ENCODE measurements at regions of chr22 and their contacts with region 1.

Region 1: DNA sequence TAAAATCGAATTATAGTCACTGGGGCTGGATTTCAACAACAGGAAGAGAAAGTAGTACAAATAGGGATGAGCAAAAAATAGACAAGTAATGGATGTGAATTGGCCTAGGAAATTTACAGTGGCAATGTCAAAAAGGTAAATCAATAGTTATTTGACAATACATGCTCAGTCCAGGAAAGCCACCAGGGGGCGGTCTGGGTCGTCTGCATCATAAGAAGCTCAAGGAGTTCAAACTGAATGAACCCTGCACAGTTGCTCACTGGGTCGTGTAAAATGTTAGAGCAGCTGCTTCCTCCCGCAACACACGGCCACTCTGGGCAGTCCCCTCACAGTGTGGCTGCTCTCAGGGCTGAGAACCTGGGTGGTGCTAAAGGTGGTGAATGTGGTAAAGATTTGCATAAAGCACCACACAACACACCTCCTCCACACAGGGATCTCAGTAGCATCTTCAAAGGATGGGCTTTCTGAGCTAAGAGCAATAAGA is 85.9 kb downstream of the ZNF280B start:
- DNase-seq: peak; percentile 96
- ATAC-seq: peak; percentile 99
- H3K4me3 ChIP-seq: no peak overlapping the region
- H3K4me3 Mint-ChIP-seq: peak overlapping the region; percentile 33
- H3K27ac ChIP-seq: peak overlapping the region in 1 of 2 donors; percentile 42
- H3K27ac Mint-ChIP-seq: peak overlapping the region; percentile 72
- H3K4me1 ChIP-seq: peaks cover 61 to 63% of the 10 kb centered on the region in 2 donors
- H3K4me1 Mint-ChIP-seq: peaks cover 65% of the 10 kb centered on the region
- H3K27me3 ChIP-seq: no peaks in the 10 kb centered on the region
- H3K27me3 Mint-ChIP-seq: no peaks in the 10 kb centered on the region
- CTCF ChIP-seq: peak; percentile 92

Region 2: GRCh38 chr22:22176929-22177616 is 245.6 kb before region 1 on chr22:
- CTCF ChIA-PET with region 1: no interaction called
- POLR2A ChIA-PET with region 1: no interaction called
- intact Hi-C with region 1: no loop called
- DNase-seq: no peak
- ATAC-seq: no peak
- H3K4me3 ChIP-seq: no peak overlapping the region
- H3K4me3 Mint-ChIP-seq: no peak overlapping the region
- H3K27ac ChIP-seq: no peak overlapping the region
- H3K27ac Mint-ChIP-seq: no peak overlapping the region
- H3K4me1 ChIP-seq: peaks cover 9 to 19% of the 10 kb centered on the region in 2 donors
- H3K4me1 Mint-ChIP-seq: peaks cover 47% of the 10 kb centered on the region
- H3K27me3 ChIP-seq: no peaks in the 10 kb centered on the region
- H3K27me3 Mint-ChIP-seq: no peaks in the 10 kb centered on the region
- CTCF ChIP-seq: no peak

Region 3: GRCh38 chr22:22248878-22249277 is 173.8 kb before region 1 on chr22:
- CTCF ChIA-PET with region 1: no interaction called
- POLR2A ChIA-PET with region 1: no interaction called
- intact Hi-C with region 1: no loop called
- DNase-seq: no peak
- ATAC-seq: peak; percentile 28
- H3K4me3 ChIP-seq: no peak overlapping the region
- H3K4me3 Mint-ChIP-seq: peak overlapping the region; percentile 27
- H3K27ac ChIP-seq: peak overlapping the region in 1 of 2 donors; percentile 31
- H3K27ac Mint-ChIP-seq: peak overlapping the region; percentile 57
- H3K4me1 ChIP-seq: peaks cover 43 to 45% of the 10 kb centered on the region in 2 donors
- H3K4me1 Mint-ChIP-seq: peaks cover 47% of the 10 kb centered on the region
- H3K27me3 ChIP-seq: no peaks in the 10 kb centered on the region
- H3K27me3 Mint-ChIP-seq: no peaks in the 10 kb centered on the region
- CTCF ChIP-seq: no peak

Region 4: GRCh38 chr22:22357024-22357883 is 65.4 kb before region 1 on chr22:
- CTCF ChIA-PET with region 1: interaction called, 10 read pairs
- POLR2A ChIA-PET with region 1: no interaction called
- intact Hi-C with region 1: loop called (anchors 5 kb)
- DNase-seq: peak; percentile 93
- ATAC-seq: peak; percentile 90
- H3K4me3 ChIP-seq: peak overlapping the region in 3 of 5 experiments; percentile 18 to 27 (median 26)
- H3K4me3 Mint-ChIP-seq: peak overlapping the region; percentile 65
- H3K27ac ChIP-seq: peak overlapping the region; percentile 61 to 71
- H3K27ac Mint-ChIP-seq: peak overlapping the region; percentile 90
- H3K4me1 ChIP-seq: peaks cover 29 to 49% of the 10 kb centered on the region in 2 donors
- H3K4me1 Mint-ChIP-seq: peaks cover 59% of the 10 kb centered on the region
- H3K27me3 ChIP-seq: no peaks in the 10 kb centered on the region
- H3K27me3 Mint-ChIP-seq: no peaks in the 10 kb centered on the region
- CTCF ChIP-seq: peak; percentile 72

Region 5: DNA sequence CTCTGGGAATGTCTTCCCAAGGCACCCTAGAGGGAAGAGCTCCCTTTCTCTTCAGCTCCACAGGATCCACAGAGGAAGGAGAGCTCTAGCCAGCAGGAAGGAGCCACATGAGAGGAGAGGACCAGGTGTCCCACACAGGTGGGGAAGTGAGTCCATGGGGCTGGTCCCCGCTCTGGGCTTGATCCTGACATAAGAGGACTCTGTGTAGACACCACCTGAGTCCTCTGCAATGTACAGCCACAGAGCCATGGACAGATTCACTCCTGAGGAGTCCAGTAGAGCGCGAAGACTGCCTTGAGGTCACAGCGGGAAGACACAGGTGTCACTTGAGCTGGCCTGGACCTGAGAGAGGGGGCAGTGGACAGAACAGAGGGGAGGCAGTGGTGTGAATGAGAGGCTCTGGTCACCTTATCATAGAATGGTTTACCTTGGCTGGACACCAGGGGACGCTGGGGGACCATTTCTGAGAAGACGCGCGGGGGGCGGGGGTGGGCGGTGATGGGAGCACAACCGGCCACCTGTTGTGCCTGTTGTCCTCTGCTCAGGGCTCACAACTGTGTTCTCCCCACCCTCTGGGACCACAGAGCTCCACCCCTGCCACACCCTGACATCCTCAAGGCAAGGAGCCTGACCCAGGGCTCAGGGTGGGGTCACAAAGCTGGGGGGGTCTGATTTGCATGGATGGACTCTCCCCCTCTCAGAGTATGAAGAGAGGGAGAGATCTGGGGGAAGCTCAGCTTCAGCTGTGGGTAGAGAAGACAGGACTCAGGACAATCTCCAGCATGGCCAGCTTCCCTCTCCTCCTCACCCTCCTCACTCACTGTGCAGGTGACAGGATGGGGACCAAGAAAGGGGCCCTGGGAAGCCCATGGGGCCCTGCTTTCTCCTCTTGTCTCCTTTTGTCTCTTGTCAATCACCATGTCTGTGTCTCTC is 42.3 kb before region 1 on chr22:
- CTCF ChIA-PET with region 1: interaction called, 23 read pairs
- POLR2A ChIA-PET with region 1: no interaction called
- intact Hi-C with region 1: no loop called
- DNase-seq: peak; percentile 87
- ATAC-seq: peak; percentile 88
- H3K4me3 ChIP-seq: peak overlapping the region in 1 of 5 experiments; percentile 15
- H3K4me3 Mint-ChIP-seq: peak overlapping the region; percentile 77
- H3K27ac ChIP-seq: peak overlapping the region; percentile 60 to 72
- H3K27ac Mint-ChIP-seq: peak overlapping the region; percentile 94
- H3K4me1 ChIP-seq: peaks cover 59 to 69% of the 10 kb centered on the region in 2 donors
- H3K4me1 Mint-ChIP-seq: peaks cover 79% of the 10 kb centered on the region
- H3K27me3 ChIP-seq: no peaks in the 10 kb centered on the region
- H3K27me3 Mint-ChIP-seq: no peaks in the 10 kb centered on the region
- CTCF ChIP-seq: peak; percentile 66

Region 6: DNA sequence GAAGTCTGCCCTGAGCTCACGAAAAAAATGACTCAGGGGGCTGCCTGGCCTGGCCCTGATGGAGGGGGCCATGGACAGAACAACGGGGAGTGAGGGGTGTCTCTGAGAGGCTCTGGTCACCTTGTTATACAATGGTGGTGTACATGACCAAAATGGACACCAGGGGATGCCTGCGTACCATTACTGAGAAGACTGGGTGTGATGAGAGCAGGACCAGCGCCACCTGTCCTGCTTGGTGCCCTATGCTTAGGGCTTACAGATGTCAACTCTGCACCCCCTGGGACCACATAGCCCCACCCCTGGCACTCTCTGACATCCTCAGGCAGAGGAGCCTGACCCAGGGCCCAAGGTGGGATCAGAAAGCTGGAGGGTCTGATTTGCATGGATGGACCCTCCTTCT is 18.9 kb before region 1 on chr22:
- CTCF ChIA-PET with region 1: interaction called, 50 read pairs
- POLR2A ChIA-PET with region 1: no interaction called
- intact Hi-C with region 1: no loop called
- DNase-seq: no peak
- ATAC-seq: peak; percentile 63
- H3K4me3 ChIP-seq: no peak overlapping the region
- H3K4me3 Mint-ChIP-seq: no peak overlapping the region
- H3K27ac ChIP-seq: no peak overlapping the region
- H3K27ac Mint-ChIP-seq: no peak overlapping the region
- H3K4me1 ChIP-seq: peaks cover 22 to 72% of the 10 kb centered on the region in 2 donors
- H3K4me1 Mint-ChIP-seq: peaks cover 60% of the 10 kb centered on the region
- H3K27me3 ChIP-seq: peaks cover 0 to 3% (median 0%) of the 10 kb centered on the region in 4 experiments
- H3K27me3 Mint-ChIP-seq: no peaks in the 10 kb centered on the region
- CTCF ChIP-seq: no peak

Region 7: DNA sequence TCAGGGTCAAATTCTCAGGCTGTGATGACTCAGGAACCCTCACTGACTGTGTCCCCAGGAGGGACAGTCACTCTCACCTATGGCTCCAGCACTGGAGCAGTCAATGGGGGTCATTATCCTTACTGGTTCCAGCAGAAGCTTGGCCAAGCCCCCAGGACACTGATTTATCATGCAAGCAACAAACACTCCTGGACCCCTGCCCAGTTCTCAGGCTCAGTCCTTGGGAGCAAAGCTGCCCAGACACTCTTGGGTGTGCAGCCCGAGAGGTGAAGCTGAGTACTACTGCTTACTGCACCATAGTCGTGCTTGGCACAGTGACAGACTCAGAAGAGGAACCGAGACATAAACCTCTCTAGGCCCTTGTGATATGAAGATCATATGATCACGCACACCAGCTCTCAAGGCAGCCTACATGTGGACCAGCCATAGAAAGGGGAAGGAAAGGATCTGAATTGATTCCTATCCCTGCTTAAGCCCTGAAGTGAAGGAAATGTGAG is 27.7 kb after region 1 on chr22:
- CTCF ChIA-PET with region 1: interaction called, 14 read pairs
- POLR2A ChIA-PET with region 1: no interaction called
- intact Hi-C with region 1: no loop called
- DNase-seq: peak; percentile 90
- ATAC-seq: peak; percentile 97
- H3K4me3 ChIP-seq: no peak overlapping the region
- H3K4me3 Mint-ChIP-seq: peak overlapping the region; percentile 59
- H3K27ac ChIP-seq: peak overlapping the region; percentile 36 to 76
- H3K27ac Mint-ChIP-seq: peak overlapping the region; percentile 78
- H3K4me1 ChIP-seq: peaks cover 30 to 32% of the 10 kb centered on the region in 2 donors
- H3K4me1 Mint-ChIP-seq: peaks cover 33% of the 10 kb centered on the region
- H3K27me3 ChIP-seq: no peaks in the 10 kb centered on the region
- H3K27me3 Mint-ChIP-seq: no peaks in the 10 kb centered on the region
- CTCF ChIP-seq: peak; percentile 31

Region 8: GRCh38 chr22:22508274-22509176 is 85.9 kb after region 1 on chr22 and contains the start of gene ZNF280B:
- CTCF ChIA-PET with region 1: interaction called, 12 read pairs
- POLR2A ChIA-PET with region 1: no interaction called
- intact Hi-C with region 1: no loop called
- DNase-seq: peak; percentile 91
- ATAC-seq: peak; percentile 99
- H3K4me3 ChIP-seq: peak within 1 kb of the TSS; percentile 4 to 80 (median 73)
- H3K4me3 Mint-ChIP-seq: peak within 1 kb of the TSS; percentile 71
- H3K27ac ChIP-seq: peak within 1 kb of the TSS in 1 of 2 donors; percentile 67
- H3K27ac Mint-ChIP-seq: peak within 1 kb of the TSS; percentile 59
- H3K4me1 ChIP-seq: peaks cover 7 to 16% of the 10 kb centered on the region in 2 donors
- H3K4me1 Mint-ChIP-seq: peaks cover 10% of the 10 kb centered on the region
- H3K27me3 ChIP-seq: peaks cover 0 to 1% (median 0%) of the 10 kb centered on the region in 4 experiments
- H3K27me3 Mint-ChIP-seq: peaks cover 2% of the 10 kb centered on the region
- CTCF ChIP-seq: peak; percentile 71
- total RNA-seq, gene ZNF280B: 2.9 and 3.5 TPM in 2 replicates